Psoas muscle (tissue), 8 donors: ENCODE measurements at regions of chr11 and their contacts with region 1.

Region 1: GRCh38 chr11:17846852-17847453 is 112.4 kb downstream of the KCNC1 start:
- DNase-seq: peak; percentile 29 to 67
- ATAC-seq: peak; percentile 84 to 91 (median 90)
- H3K4me3 ChIP-seq: no peak overlapping the region
- H3K27ac ChIP-seq: peak overlapping the region; percentile 47
- H3K4me1 ChIP-seq: peaks cover 36% of the 10 kb centered on the region
- H3K27me3 ChIP-seq: no peaks in the 10 kb centered on the region
- CTCF ChIP-seq: peak; percentile 56

Region 2: GRCh38 chr11:17760102-17761029 is 86.6 kb before region 1 on chr11:
- intact Hi-C with region 1: loop called in 1 of 2 experiments (anchors 2 kb)
- DNase-seq: peak; percentile 45 to 74
- ATAC-seq: peak; percentile 86 to 95 (median 93)
- H3K4me3 ChIP-seq: no peak overlapping the region
- H3K27ac ChIP-seq: peak overlapping the region; percentile 27
- H3K4me1 ChIP-seq: no peaks in the 10 kb centered on the region
- H3K27me3 ChIP-seq: no peaks in the 10 kb centered on the region
- CTCF ChIP-seq: peak; percentile 58

Region 3: DNA sequence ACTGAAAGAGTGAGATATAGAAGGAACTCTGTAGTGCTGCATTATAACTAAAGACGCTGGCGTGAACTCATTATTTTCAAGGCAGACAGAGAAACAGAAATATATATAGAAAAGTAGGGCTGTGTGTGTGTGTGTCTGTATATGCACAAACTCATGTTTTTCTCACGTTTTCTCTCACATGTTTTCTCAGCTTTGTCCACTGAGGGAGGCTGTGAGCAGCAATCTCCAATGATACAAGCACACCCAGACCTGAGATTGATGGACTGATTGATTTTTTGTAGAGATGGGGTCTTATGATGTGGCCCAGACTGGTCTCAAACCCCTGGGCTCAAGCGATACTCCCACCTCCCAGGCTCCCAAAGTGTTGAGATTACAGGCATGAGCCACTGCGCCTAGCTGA is 43.4 kb after region 1 on chr11:
- intact Hi-C with region 1: no loop called
- DNase-seq: no peak
- ATAC-seq: no peak
- H3K4me3 ChIP-seq: no peak overlapping the region
- H3K27ac ChIP-seq: no peak overlapping the region
- H3K4me1 ChIP-seq: no peaks in the 10 kb centered on the region
- H3K27me3 ChIP-seq: no peaks in the 10 kb centered on the region
- CTCF ChIP-seq: no peak

Region 4: GRCh38 chr11:18329196-18329870 is 482.4 kb after region 1 on chr11:
- intact Hi-C with region 1: no loop called
- DNase-seq: no peak
- ATAC-seq: no peak
- H3K4me3 ChIP-seq: no peak overlapping the region
- H3K27ac ChIP-seq: no peak overlapping the region
- H3K4me1 ChIP-seq: peaks cover 8% of the 10 kb centered on the region
- H3K27me3 ChIP-seq: no peaks in the 10 kb centered on the region
- CTCF ChIP-seq: no peak